Left cardiac atrium (tissue), 4 donors: ENCODE measurements at regions of chr19 and their contacts with region 1.

Region 1: GRCh38 chr19:572140-572742 is at the start of gene BSG:
- DNase-seq: peak; percentile 99
- ATAC-seq: peak; percentile 83 to 87
- total RNA-seq, gene BSG: 847 to 1,152 TPM

Region 2: GRCh38 chr19:532561-533363 is 39.5 kb before region 1 on chr19:
- intact Hi-C with region 1: loop called in 1 of 2 experiments (anchors 2 kb)
- DNase-seq: peak; percentile 83
- ATAC-seq: peak; percentile 57 to 68

Region 3: GRCh38 chr19:737581-738093 is 165.4 kb after region 1 on chr19:
- intact Hi-C with region 1: loop called in 1 of 2 experiments (anchors 10 kb)
- DNase-seq: no peak
- ATAC-seq: peak; percentile 45 to 53